Naive thymus-derived CD4-positive, alpha-beta T cell (primary cell): ENCODE measurements at regions of chr11 and their contacts with region 1.

Region 1: DNA sequence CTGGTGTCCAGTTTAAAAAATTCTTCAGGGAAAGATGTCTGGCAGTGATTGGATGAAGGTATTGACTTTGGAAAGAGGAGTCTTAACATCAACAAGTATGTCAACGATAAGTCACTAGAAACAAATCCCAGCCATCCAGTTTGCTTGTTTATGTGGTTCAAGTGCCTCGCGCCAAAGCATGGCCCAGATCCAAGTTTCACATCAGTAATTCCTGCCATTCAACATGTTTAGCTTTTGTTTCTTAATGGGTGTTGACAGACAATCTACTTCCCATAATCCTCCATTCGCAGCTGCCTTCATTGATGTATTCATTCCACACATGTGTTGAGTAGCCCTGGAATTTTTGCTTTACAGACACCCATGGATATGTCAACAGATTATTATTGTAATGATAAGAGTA is 77.8 kb downstream of the UBASH3B start:
- DNase-seq: no peak
- ATAC-seq: peak; percentile 36
- H3K4me3 ChIP-seq: no peak overlapping the region
- H3K4me3 Mint-ChIP-seq: peak overlapping the region in 2 of 10 donors; percentile 57 to 76
- H3K27ac ChIP-seq: no peak overlapping the region
- H3K27ac Mint-ChIP-seq: peak overlapping the region in 3 of 9 donors; percentile 6 to 23 (median 21)
- H3K4me1 ChIP-seq: peaks cover 16 to 55% of the 10 kb centered on the region in 2 donors
- H3K4me1 Mint-ChIP-seq: peaks cover 11 to 45% (median 26%) of the 10 kb centered on the region in 7 donors
- H3K27me3 ChIP-seq: no peaks in the 10 kb centered on the region
- H3K27me3 Mint-ChIP-seq: no peaks in the 10 kb centered on the region

Region 2: GRCh38 chr11:122721964-122722266 is 11.4 kb before region 1 on chr11:
- CTCF ChIA-PET with region 1: interaction called, 5 read pairs
- POLR2A ChIA-PET with region 1: interaction called, 18 read pairs
- intact Hi-C with region 1: no loop called
- DNase-seq: peak in 6 of 9 donors; percentile 10 to 42 (median 29)
- ATAC-seq: peak; percentile 44
- H3K4me3 ChIP-seq: no peak overlapping the region
- H3K4me3 Mint-ChIP-seq: peak overlapping the region in 8 of 10 donors; percentile 7 to 77 (median 44)
- H3K27ac ChIP-seq: peak overlapping the region; percentile 1
- H3K27ac Mint-ChIP-seq: peak overlapping the region in 8 of 9 donors; percentile 47 to 95 (median 81)
- H3K4me1 ChIP-seq: peaks cover 28 to 57% of the 10 kb centered on the region in 2 donors
- H3K4me1 Mint-ChIP-seq: peaks cover 51 to 86% (median 79%) of the 10 kb centered on the region in 7 donors
- H3K27me3 ChIP-seq: no peaks in the 10 kb centered on the region
- H3K27me3 Mint-ChIP-seq: peaks cover 0 to 16% (median 0%) of the 10 kb centered on the region in 5 donors

Region 3: DNA sequence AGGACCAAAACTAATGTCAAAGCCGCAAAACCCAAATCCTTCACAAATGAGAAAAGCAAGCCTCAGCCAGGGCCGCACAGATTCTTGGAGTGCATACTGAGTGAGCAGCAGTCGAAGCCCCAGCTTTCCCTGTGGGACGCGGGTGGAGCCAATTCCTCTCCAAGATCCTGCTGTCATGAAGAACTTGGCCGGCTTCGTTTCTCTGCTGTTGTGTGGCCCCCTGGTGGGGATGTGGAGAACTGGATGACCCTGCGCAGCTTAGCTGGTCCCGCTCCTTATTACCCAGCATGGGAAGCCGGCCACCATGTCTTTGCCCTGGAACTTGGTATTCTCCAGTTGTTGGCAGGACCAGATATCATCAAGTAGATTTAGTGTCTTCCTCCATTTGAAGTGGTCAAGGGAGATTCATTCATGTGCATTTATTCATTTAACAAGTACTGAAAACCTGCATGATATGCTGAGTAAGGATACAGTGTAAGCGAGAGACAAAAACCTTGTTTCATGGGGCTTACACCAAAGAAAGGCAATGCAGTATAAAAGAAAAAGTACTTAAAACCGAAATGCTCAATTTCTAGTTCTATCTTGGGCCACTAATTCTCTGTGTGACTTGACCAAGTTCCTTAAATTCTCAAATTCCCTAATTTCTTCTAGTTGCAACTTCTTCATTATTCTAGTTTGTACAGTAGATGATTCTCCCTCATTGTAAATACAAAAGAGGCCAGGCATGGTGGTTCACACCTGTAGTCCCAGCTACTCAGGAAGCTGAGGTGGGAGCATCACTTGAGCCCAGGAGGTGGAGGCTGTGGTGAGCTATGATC is 48.3 kb after region 1 on chr11:
- CTCF ChIA-PET with region 1: no interaction called
- POLR2A ChIA-PET with region 1: no interaction called
- intact Hi-C with region 1: no loop called
- DNase-seq: peak; percentile 50 to 80 (median 69)
- ATAC-seq: peak; percentile 95
- H3K4me3 ChIP-seq: no peak overlapping the region
- H3K4me3 Mint-ChIP-seq: no peak overlapping the region
- H3K27ac ChIP-seq: no peak overlapping the region
- H3K27ac Mint-ChIP-seq: peak overlapping the region in 2 of 9 donors; percentile 14 to 56
- H3K4me1 ChIP-seq: no peaks in the 10 kb centered on the region
- H3K4me1 Mint-ChIP-seq: peaks cover 0 to 22% (median 11%) of the 10 kb centered on the region in 7 donors
- H3K27me3 ChIP-seq: no peaks in the 10 kb centered on the region
- H3K27me3 Mint-ChIP-seq: no peaks in the 10 kb centered on the region